IMR-90 (cell line): ENCODE measurements at regions of chr5 and their contacts with region 1.

Region 1: GRCh38 chr5:9765419-9766140 is 135.4 kb upstream of the TAS2R1 start:
- DNase-seq: peak; percentile 93
- ATAC-seq: peak; percentile 61
- H3K4me3 ChIP-seq: no peak overlapping the region
- H3K27ac ChIP-seq: no peak overlapping the region
- H3K4me1 ChIP-seq: peaks cover 4% of the 10 kb centered on the region; the same call in 1 of the 2 replicates
- H3K27me3 ChIP-seq: no peaks in the 10 kb centered on the region
- CTCF ChIP-seq: no peak
- POLR2A ChIP-seq: no peak
- RAD21 ChIP-seq: peak; percentile 31; the same call in 1 of the 2 replicates

Region 2: GRCh38 chr5:9529513-9529912 is 236.1 kb before region 1 on chr5:
- CTCF ChIA-PET with region 1: no interaction called
- POLR2A ChIA-PET with region 1: no interaction called
- dilution Hi-C with region 1: no loop called
- in situ Hi-C with region 1: no loop called
- intact Hi-C with region 1: no loop called
- DNase-seq: no peak
- ATAC-seq: no peak
- H3K4me3 ChIP-seq: no peak overlapping the region
- H3K27ac ChIP-seq: no peak overlapping the region
- H3K4me1 ChIP-seq: peaks cover 1% of the 10 kb centered on the region; the same call in 1 of the 2 replicates
- H3K27me3 ChIP-seq: no peaks in the 10 kb centered on the region
- CTCF ChIP-seq: no peak
- POLR2A ChIP-seq: no peak
- RAD21 ChIP-seq: no peak

Region 3: GRCh38 chr5:9686211-9686610 is 79.4 kb before region 1 on chr5:
- CTCF ChIA-PET with region 1: no interaction called
- POLR2A ChIA-PET with region 1: no interaction called
- dilution Hi-C with region 1: no loop called
- in situ Hi-C with region 1: no loop called
- intact Hi-C with region 1: no loop called
- DNase-seq: peak; percentile 83
- ATAC-seq: peak; percentile 79
- H3K4me3 ChIP-seq: no peak overlapping the region
- H3K27ac ChIP-seq: no peak overlapping the region
- H3K4me1 ChIP-seq: no peaks in the 10 kb centered on the region
- H3K27me3 ChIP-seq: no peaks in the 10 kb centered on the region
- CTCF ChIP-seq: no peak
- POLR2A ChIP-seq: no peak
- RAD21 ChIP-seq: no peak

Region 4: GRCh38 chr5:9726931-9727330 is 38.6 kb before region 1 on chr5:
- CTCF ChIA-PET with region 1: no interaction called
- POLR2A ChIA-PET with region 1: no interaction called
- dilution Hi-C with region 1: no loop called
- in situ Hi-C with region 1: no loop called
- intact Hi-C with region 1: loop called (anchors 2 kb)
- DNase-seq: no peak
- ATAC-seq: no peak
- H3K4me3 ChIP-seq: no peak overlapping the region
- H3K27ac ChIP-seq: no peak overlapping the region
- H3K4me1 ChIP-seq: no peaks in the 10 kb centered on the region
- H3K27me3 ChIP-seq: no peaks in the 10 kb centered on the region
- CTCF ChIP-seq: no peak
- POLR2A ChIP-seq: no peak
- RAD21 ChIP-seq: no peak

Region 5: GRCh38 chr5:9987101-9987500 is 221.5 kb after region 1 on chr5:
- CTCF ChIA-PET with region 1: no interaction called
- POLR2A ChIA-PET with region 1: no interaction called
- dilution Hi-C with region 1: no loop called
- in situ Hi-C with region 1: no loop called
- intact Hi-C with region 1: no loop called
- DNase-seq: no peak
- ATAC-seq: no peak
- H3K4me3 ChIP-seq: no peak overlapping the region
- H3K27ac ChIP-seq: no peak overlapping the region
- H3K4me1 ChIP-seq: no peaks in the 10 kb centered on the region
- H3K27me3 ChIP-seq: peaks cover 8% of the 10 kb centered on the region
- CTCF ChIP-seq: no peak
- POLR2A ChIP-seq: no peak
- RAD21 ChIP-seq: no peak